HEK293T (cell line): ENCODE measurements at regions of chr10 and their contacts with region 1.

Region 1: GRCh38 chr10:58394471-58394870 is 9.3 kb downstream of the TFAM start:
- DNase-seq: no peak

Region 2: GRCh38 chr10:58201704-58202103 is 192.8 kb before region 1 on chr10:
- CTCF ChIA-PET with region 1: interaction called, 14 read pairs
- POLR2A ChIA-PET with region 1: no interaction called
- DNase-seq: no peak